Activated T-helper 1 cell treated with anti-CD3 and anti-CD28 coated beads, Interleukin-12 subunit alpha, Interleukin-12 subunit beta, Interleukin-2, Interleukin-4 antibody, amounts not matched to agents 30 ng/mL and 10 ng/mL and 1 ng/mL, durations not matched to agents 14 hours and 24 hours and 36 hours (primary cell): ENCODE measurements at regions of chr4 and their contacts with region 1.

Region 1: DNA sequence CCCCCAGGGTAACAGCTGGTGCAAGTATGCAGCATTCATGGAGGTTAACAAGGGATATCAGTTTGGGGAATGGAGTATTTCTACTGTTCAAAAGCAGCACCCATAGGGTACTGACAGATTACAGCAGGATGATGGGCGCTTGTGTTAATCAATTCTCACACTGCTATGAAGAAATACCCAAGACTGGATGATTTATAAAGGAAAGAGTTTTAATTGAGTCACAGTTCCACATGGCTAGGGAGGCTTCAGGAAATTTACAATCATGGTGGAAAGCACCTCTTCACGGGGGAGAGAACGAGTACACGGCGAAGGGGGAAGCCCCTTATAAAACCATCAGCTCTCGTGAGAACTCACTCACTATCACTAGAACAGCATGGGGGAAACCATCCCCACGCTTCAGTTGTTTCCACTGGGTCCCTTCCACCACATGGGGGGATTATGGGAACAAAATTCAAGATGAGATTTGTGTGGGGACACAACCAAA is 64.1 kb downstream of the TNIP2 start:
- DNase-seq: no peak
- H3K4me3 Mint-ChIP-seq: no peak overlapping the region
- H3K27ac Mint-ChIP-seq: peak overlapping the region; percentile 44
- H3K4me1 Mint-ChIP-seq: peaks cover 24% of the 10 kb centered on the region
- H3K27me3 Mint-ChIP-seq: no peaks in the 10 kb centered on the region

Region 2: DNA sequence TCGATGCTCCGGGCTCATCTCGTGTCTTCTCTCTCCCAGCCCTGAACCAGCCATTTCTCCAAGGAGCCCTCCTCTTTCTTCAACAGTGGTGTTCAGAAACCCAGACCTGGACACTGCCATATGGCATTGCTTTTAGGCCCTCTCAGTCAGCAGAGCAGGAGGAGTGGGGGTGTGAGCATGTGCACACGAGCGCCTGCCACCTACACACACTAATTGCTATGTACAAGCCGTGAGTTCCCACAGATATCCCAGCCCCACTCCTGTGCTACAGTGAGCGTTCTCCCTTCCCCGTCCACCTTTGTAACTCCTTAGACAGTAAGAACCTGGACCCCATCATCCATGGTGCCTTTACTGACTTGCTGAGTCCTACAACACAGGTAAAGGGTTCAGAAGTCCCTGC is 10.4 kb after region 1 on chr4:
- intact Hi-C with region 1: loop called (anchors 1 kb)
- DNase-seq: no peak
- H3K4me3 Mint-ChIP-seq: no peak overlapping the region
- H3K27ac Mint-ChIP-seq: no peak overlapping the region
- H3K4me1 Mint-ChIP-seq: peaks cover 4% of the 10 kb centered on the region
- H3K27me3 Mint-ChIP-seq: no peaks in the 10 kb centered on the region